ENCODE measurements at regions of chr15 and their contacts with region 1.

Region 1: GRCh38 chr15:41011055-41011815 is 58.0 kb downstream of the CHAC1 start:
- DNase-seq: no peak
- ATAC-seq: no peak
- H3K4me3 ChIP-seq: no peak overlapping the region
- H3K27ac ChIP-seq: no peak overlapping the region
- H3K4me1 ChIP-seq: no peaks in the 10 kb centered on the region
- H3K27me3 ChIP-seq: no peaks in the 10 kb centered on the region
- CTCF ChIP-seq: no peak

Region 2: DNA sequence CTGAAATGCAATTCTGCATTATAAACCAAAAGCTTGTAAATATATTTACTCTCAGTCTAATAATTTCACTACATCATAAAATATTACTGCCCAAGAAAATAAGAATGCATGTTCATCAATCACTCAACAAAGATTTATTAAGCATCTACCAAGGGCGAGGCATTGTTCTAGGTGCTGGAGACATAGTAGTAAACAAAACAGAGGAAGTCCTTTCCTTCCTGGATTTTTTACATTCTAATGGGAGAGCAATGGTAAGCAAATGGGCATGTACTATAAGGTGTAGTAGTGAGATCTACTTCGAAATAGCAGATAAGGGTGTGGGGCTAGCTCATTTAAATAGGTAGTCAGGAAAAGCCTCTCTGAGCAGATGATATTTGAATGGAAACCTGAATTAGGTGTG is 215.2 kb before region 1 on chr15:
- CTCF ChIA-PET with region 1: no interaction called
- POLR2A ChIA-PET with region 1: interaction called, 10 read pairs
- in situ Hi-C with region 1: no loop called
- intact Hi-C with region 1: no loop called
- DNase-seq: no peak
- ATAC-seq: no peak
- H3K4me3 ChIP-seq: no peak overlapping the region
- H3K27ac ChIP-seq: no peak overlapping the region
- H3K4me1 ChIP-seq: peaks cover 9% of the 10 kb centered on the region
- H3K27me3 ChIP-seq: no peaks in the 10 kb centered on the region
- CTCF ChIP-seq: no peak

Region 3: GRCh38 chr15:41043276-41043951 is 32.2 kb after region 1 on chr15:
- CTCF ChIA-PET with region 1: no interaction called
- POLR2A ChIA-PET with region 1: interaction called, 16 read pairs
- in situ Hi-C with region 1: no loop called
- intact Hi-C with region 1: no loop called
- DNase-seq: no peak
- ATAC-seq: no peak
- H3K4me3 ChIP-seq: no peak overlapping the region
- H3K27ac ChIP-seq: no peak overlapping the region
- H3K4me1 ChIP-seq: no peaks in the 10 kb centered on the region
- H3K27me3 ChIP-seq: no peaks in the 10 kb centered on the region
- CTCF ChIP-seq: no peak

Measured in Panc1 (cell line).